CD14-positive monocyte (primary cell): ENCODE measurements at regions of chr11 and their contacts with region 1.

Region 1: GRCh38 chr11:13343931-13344717 is 66.5 kb downstream of the BMAL1 start:
- DNase-seq: peak; percentile 38 to 53 (median 45)
- H3K4me3 ChIP-seq: no peak overlapping the region
- H3K4me3 Mint-ChIP-seq: no peak overlapping the region
- H3K27ac ChIP-seq: no peak overlapping the region
- H3K27ac Mint-ChIP-seq: peak overlapping the region in 1 of 7 donors; percentile 34
- H3K4me1 ChIP-seq: peaks cover 5 to 8% of the 10 kb centered on the region in 2 donors
- H3K4me1 Mint-ChIP-seq: peaks cover 31% of the 10 kb centered on the region
- H3K27me3 ChIP-seq: no peaks in the 10 kb centered on the region
- H3K27me3 Mint-ChIP-seq: peaks cover 0 to 2% (median 1%) of the 10 kb centered on the region in 3 donors
- CTCF ChIP-seq: peak; percentile 87

Region 2: GRCh38 chr11:12963792-12964536 is 380.2 kb before region 1 on chr11:
- intact Hi-C with region 1: loop called (anchors 2 to 5 kb)
- DNase-seq: peak; percentile 9 to 46 (median 33)
- H3K4me3 ChIP-seq: no peak overlapping the region
- H3K4me3 Mint-ChIP-seq: no peak overlapping the region
- H3K27ac ChIP-seq: no peak overlapping the region
- H3K27ac Mint-ChIP-seq: no peak overlapping the region
- H3K4me1 ChIP-seq: no peaks in the 10 kb centered on the region
- H3K4me1 Mint-ChIP-seq: no peaks in the 10 kb centered on the region
- H3K27me3 ChIP-seq: no peaks in the 10 kb centered on the region
- H3K27me3 Mint-ChIP-seq: peaks cover 6 to 10% (median 8%) of the 10 kb centered on the region in 3 donors
- CTCF ChIP-seq: peak; percentile 82

Region 3: DNA sequence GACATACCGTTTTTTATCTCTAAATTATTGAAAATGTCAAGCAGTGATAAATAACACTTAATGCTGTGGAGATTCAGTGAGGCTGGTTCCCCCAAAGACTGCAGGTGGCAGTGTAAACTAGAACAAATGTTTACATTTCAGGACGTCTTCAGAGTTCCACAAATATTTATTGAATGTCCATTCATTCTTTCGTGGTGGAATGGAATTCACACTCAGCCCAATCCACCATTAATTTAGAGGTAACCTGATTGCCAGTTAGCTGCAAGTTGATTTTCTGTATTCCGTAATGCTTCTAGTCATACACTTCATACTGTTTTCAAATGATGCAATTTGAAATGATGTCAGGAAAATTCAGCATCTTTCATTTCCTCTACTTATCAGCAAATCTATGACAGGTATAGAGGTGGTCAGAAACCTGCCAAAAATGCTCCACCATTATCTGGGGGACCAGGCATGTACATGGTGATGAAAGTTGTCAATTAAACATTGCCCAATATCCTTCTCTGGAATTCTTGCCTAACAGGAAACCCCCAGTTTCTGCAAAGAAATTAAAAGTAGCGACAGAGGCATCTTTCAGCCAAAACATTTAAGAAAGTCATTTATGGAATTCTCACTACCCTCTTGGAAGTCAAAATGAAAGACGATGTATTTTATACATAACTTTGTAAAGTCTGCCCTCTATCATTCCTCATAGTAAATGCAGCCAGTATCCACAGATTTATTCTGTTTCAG is 160.9 kb before region 1 on chr11:
- intact Hi-C with region 1: loop called (anchors 10 kb)
- DNase-seq: peak; percentile 3 to 21 (median 7)
- H3K4me3 ChIP-seq: peak overlapping the region in 1 of 3 experiments; percentile 18
- H3K4me3 Mint-ChIP-seq: peak overlapping the region in 1 of 2 donors; percentile 41
- H3K27ac ChIP-seq: no peak overlapping the region
- H3K27ac Mint-ChIP-seq: no peak overlapping the region
- H3K4me1 ChIP-seq: peaks cover 9% of the 10 kb centered on the region in 2 donors
- H3K4me1 Mint-ChIP-seq: peaks cover 7% of the 10 kb centered on the region
- H3K27me3 ChIP-seq: no peaks in the 10 kb centered on the region
- H3K27me3 Mint-ChIP-seq: peaks cover 3 to 4% (median 3%) of the 10 kb centered on the region in 3 donors
- CTCF ChIP-seq: peak; percentile 45